ENCODE measurements at regions of chr5 and their contacts with region 1.

Region 1: DNA sequence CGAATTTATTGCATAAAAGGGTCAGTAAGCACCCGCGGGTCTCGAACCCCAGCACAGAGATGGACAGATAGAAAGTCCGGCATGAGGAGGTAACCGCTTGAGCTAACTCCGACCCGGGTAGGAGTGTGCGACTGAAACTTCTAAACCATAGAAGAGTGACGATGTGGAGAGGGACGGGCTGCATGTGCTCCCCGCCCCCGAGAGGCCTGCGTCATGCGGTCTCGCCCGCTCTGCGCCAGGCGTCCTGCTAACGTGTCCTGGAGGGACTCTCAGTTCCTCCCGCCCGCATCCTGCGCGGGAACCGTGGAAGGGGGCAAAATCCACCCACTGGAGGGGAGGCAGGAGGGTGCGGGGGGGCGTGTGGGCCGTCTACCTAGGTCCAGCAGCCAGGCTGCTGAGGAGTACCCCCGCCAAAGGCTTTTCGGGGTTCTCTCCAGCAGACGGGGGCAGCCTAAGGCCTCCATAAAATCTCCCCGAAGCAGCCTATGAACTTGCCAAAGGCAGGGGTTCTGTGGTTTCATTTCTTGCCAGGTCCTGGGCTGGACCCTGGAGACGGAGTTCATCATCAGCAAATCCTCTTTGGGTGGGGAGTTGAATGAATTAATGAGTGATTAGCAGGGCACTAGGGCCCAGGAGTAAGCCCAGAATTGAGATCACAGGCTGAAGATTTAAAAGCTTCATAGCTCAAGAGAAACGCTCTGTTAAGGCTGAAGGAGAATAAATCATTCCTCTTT is 51.9 kb downstream of the TGFBI start:
- DNase-seq: peak; percentile 86 to 90 (median 88)
- ATAC-seq: peak; percentile 97
- H3K4me3 ChIP-seq: peak overlapping the region; percentile 43
- H3K27ac ChIP-seq: peak overlapping the region; percentile 64; the same call in 2 of the 3 replicates
- H3K4me1 ChIP-seq: peaks cover 9 to 12% of the 10 kb centered on the region in 2 experiments; a peak in 4 of 5 replicates
- H3K27me3 ChIP-seq: peaks cover 11 to 15% of the 10 kb centered on the region in 2 experiments
- CTCF ChIP-seq: no peak
- EP300 ChIP-seq: peak; percentile 71
- POLR2A ChIP-seq: peak; percentile 86
- RAD21 ChIP-seq: 0 out of 4 replicates have a peak, but pooled peaks of 1 of the 2 experiments have one; percentile 4

Region 2: DNA sequence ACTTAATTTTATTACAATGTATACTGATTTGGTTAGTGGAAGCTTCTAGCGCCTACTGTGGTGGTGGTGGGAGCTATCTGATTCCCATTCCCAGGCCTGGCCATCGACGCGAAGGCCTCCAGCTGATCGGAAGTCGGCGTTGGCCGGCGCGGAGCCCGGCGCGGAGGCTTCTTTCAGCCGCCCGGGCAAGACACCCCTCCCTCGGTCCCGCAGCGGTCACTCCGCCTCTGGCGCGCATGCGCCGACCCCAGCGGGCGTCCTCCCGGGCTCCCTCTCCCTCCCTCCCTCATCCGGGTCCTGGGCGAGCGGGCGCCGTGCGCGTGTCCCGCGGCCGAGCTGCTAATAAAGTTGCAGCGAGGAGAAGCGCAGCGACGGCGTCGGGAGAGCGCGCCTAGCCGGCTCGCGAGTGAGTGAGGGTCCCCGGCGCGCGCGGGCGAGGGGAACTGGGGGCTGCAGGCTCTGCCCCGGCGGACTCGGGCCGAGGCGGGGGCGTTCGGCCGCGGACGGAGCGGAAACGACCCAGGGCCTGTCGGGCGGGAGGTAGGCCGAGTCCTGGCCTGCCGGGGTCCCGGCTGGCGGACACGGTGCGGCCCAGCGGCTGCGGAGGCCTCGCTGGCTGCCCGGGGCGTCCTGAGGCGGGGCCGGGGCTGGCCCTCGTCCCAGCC is 52.0 kb after region 1 on chr5 and contains the start of gene SMAD5:
- CTCF ChIA-PET with region 1: no interaction called
- POLR2A ChIA-PET with region 1: interaction called, 3 read pairs
- in situ Hi-C with region 1: no loop called
- intact Hi-C with region 1: loop called (anchors 5 kb)
- DNase-seq: peak; percentile 97 to 99 (median 99)
- ATAC-seq: peak; percentile 93
- H3K4me3 ChIP-seq: peak within 1 kb of the TSS; percentile 81
- H3K27ac ChIP-seq: peak within 1 kb of the TSS; percentile 83
- H3K4me1 ChIP-seq: peaks cover 13 to 21% of the 10 kb centered on the region in 2 experiments; a peak in 4 of 5 replicates
- H3K27me3 ChIP-seq: no peaks in the 10 kb centered on the region
- CTCF ChIP-seq: no peak
- EP300 ChIP-seq: no peak
- POLR2A ChIP-seq: peak; percentile 79
- RAD21 ChIP-seq: 0 out of 4 replicates have a peak, but pooled peaks of 1 of the 2 experiments have one; percentile 3
- polyA plus RNA-seq, gene SMAD5: 14.2 to 18.9 TPM

Region 3: GRCh38 chr5:136174021-136174659 is 93.5 kb after region 1 on chr5:
- CTCF ChIA-PET with region 1: no interaction called
- POLR2A ChIA-PET with region 1: no interaction called
- in situ Hi-C with region 1: no loop called
- intact Hi-C with region 1: loop called (anchors 5 kb)
- DNase-seq: peak; percentile 36 to 71 (median 52)
- ATAC-seq: peak; percentile 90
- H3K4me3 ChIP-seq: no peak overlapping the region
- H3K27ac ChIP-seq: no peak overlapping the region
- H3K4me1 ChIP-seq: 0 out of 5 replicates have a peak, but pooled peaks cover 0 to 2% of the 10 kb centered on the region in 2 experiments
- H3K27me3 ChIP-seq: no peaks in the 10 kb centered on the region
- CTCF ChIP-seq: peak; percentile 48 to 83 (median 62); a peak in 5 of 6 replicates
- EP300 ChIP-seq: no peak
- POLR2A ChIP-seq: no peak
- RAD21 ChIP-seq: peak; percentile 88 to 93

Region 4: GRCh38 chr5:136200130-136200529 is 119.5 kb after region 1 on chr5:
- CTCF ChIA-PET with region 1: no interaction called
- POLR2A ChIA-PET with region 1: no interaction called
- in situ Hi-C with region 1: no loop called
- intact Hi-C with region 1: no loop called
- DNase-seq: no peak
- ATAC-seq: no peak
- H3K4me3 ChIP-seq: no peak overlapping the region
- H3K27ac ChIP-seq: no peak overlapping the region
- H3K4me1 ChIP-seq: no peaks in the 10 kb centered on the region
- H3K27me3 ChIP-seq: peaks cover 2 to 58% of the 10 kb centered on the region in 2 experiments; a peak in 4 of 5 replicates
- CTCF ChIP-seq: no peak
- EP300 ChIP-seq: no peak
- POLR2A ChIP-seq: no peak
- RAD21 ChIP-seq: no peak

Measured in K562 (cell line).